ENCODE measurements at regions of chr18 and their contacts with region 1.

Region 1: GRCh38 chr18:47912794-47913585 is 17.5 kb downstream of the SMAD2 start:
- DNase-seq: no peak
- H3K4me3 ChIP-seq: no peak overlapping the region
- H3K4me3 Mint-ChIP-seq: peak overlapping the region in 6 of 7 donors; percentile 6 to 75 (median 56)
- H3K27ac ChIP-seq: no peak overlapping the region
- H3K27ac Mint-ChIP-seq: peak overlapping the region; percentile 41 to 91 (median 80)
- H3K4me1 ChIP-seq: peaks cover 60% of the 10 kb centered on the region
- H3K4me1 Mint-ChIP-seq: peaks cover 70 to 97% (median 94%) of the 10 kb centered on the region in 3 donors
- H3K27me3 ChIP-seq: no peaks in the 10 kb centered on the region
- H3K27me3 Mint-ChIP-seq: no peaks in the 10 kb centered on the region

Region 2: DNA sequence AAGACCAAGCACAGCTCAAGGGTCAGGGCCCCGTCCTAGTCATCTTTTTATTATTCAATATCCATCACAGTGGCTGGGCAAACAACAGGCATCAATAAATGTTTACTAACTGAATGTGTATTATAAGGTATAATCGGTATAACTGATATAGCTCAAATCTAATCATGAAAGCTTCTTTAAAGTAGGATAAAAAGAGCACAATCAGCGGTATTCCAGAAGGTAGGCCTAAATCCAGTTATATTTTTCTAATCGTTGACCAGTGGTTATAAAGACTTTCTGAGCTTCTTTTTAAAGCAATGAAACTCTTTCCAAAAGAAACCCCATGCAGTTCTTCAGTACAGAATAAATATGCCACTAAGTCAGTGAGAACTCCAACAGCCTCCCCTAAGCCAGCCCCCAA is 74.6 kb before region 1 on chr18:
- CTCF ChIA-PET with region 1: no interaction called
- POLR2A ChIA-PET with region 1: interaction called, 10 read pairs
- DNase-seq: no peak
- H3K4me3 ChIP-seq: no peak overlapping the region
- H3K4me3 Mint-ChIP-seq: no peak overlapping the region
- H3K27ac ChIP-seq: no peak overlapping the region
- H3K27ac Mint-ChIP-seq: no peak overlapping the region
- H3K4me1 ChIP-seq: no peaks in the 10 kb centered on the region
- H3K4me1 Mint-ChIP-seq: no peaks in the 10 kb centered on the region
- H3K27me3 ChIP-seq: no peaks in the 10 kb centered on the region
- H3K27me3 Mint-ChIP-seq: peaks cover 0 to 1% of the 10 kb centered on the region in 2 donors